Activated CD4-positive, alpha-beta memory T cell treated with anti-CD3 and anti-CD28 coated beads, Interleukin-2, amount 10 ng/mL, durations not matched to agents 7 days and 5 days (primary cell): ENCODE measurements at regions of chr1 and their contacts with region 1.

Region 1: GRCh38 chr1:248858891-248859889 is at the start of gene ZNF692:
- DNase-seq: peak; percentile 98
- H3K4me3 Mint-ChIP-seq: peak within 1 kb of the TSS; percentile 84
- H3K27ac Mint-ChIP-seq: peak within 1 kb of the TSS; percentile 93
- H3K4me1 Mint-ChIP-seq: peaks cover 57% of the 10 kb centered on the region
- H3K27me3 Mint-ChIP-seq: no peaks in the 10 kb centered on the region
- total RNA-seq, gene ZNF692: 45.9 to 49.8 TPM

Region 2: DNA sequence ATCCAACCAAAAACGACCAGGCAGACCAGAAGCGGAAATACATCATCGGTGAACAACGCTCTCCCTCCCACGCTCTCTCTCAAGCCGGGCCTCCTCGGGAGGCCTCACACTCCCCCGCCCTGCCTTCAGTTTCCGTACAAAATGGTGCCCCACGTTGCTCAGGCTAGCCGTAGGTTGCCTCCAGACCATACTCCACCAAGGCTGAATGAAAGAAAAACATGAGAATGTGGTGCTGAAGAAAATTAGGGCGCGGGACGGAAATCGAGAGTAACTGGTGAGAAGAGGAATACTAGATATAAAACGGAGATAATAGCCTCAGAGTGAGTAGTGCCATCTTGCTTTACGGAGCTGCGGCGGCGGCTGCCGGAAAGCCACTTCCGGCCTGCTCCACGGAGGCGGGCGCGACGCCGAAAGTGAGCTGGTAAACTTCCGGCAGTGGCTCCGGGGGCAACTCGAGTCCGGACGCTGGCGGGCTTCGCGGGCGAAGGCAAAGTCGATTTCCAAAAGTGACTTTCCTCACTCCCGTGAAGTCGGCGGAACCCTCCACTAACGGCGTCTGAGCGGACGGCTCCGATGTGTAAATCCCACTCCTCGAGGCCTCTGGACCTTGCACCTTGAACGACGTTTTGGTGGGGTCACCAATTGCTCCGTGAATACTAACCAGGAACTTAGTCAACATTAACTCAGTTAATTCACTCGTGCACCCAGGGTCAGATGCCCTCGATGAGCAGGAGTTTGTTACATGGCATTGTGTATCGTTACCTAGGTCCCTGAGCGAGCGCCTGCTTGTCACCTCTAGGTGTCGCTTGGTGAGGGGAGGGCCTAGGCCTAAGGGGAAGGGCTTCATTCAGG is 33.1 kb before region 1 on chr1 and contains the start of gene SH3BP5L:
- CTCF ChIA-PET with region 1: interaction called, 11 read pairs
- POLR2A ChIA-PET with region 1: interaction called, 25 read pairs
- DNase-seq: peak; percentile 91
- H3K4me3 Mint-ChIP-seq: peak within 1 kb of the TSS; percentile 84
- H3K27ac Mint-ChIP-seq: peak within 1 kb of the TSS; percentile 98
- H3K4me1 Mint-ChIP-seq: peaks cover 56% of the 10 kb centered on the region
- H3K27me3 Mint-ChIP-seq: peaks cover 2% of the 10 kb centered on the region
- total RNA-seq, gene SH3BP5L: 31.4 to 32.0 TPM

Region 3: DNA sequence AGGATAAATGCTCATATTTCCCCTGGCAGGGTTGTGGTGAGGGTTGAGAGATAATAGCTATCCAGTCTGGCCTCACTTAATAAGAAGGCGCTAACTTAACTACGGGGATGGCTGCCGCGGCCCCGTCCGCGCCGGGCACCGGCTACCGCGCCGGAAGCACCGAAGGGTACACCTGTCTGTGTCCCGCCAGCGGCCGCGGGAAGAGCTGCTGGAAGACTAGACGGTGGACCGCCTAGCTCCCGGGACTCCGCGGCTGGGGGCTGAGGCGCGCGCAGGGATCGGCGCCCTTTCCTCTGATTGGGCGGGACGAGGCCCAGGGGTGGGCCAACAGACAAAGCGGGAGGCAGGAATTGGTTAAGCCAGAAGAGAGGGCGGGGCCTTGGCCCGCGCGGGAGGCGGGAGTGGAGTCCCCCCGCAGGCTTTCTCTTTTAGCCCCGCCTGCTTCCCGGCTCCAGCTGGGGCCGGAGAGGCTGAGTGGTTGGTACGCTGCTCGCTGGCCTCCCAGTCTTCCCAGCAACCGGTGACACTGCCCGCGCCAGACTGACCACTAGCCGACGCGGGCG is 21.3 kb before region 1 on chr1 and contains the start of gene ZNF672:
- CTCF ChIA-PET with region 1: interaction called, 43 read pairs
- POLR2A ChIA-PET with region 1: interaction called, 90 read pairs
- DNase-seq: peak; percentile 96
- H3K4me3 Mint-ChIP-seq: no peak within 1 kb of the TSS
- H3K27ac Mint-ChIP-seq: no peak within 1 kb of the TSS
- H3K4me1 Mint-ChIP-seq: peaks cover 29% of the 10 kb centered on the region
- H3K27me3 Mint-ChIP-seq: peaks cover 4% of the 10 kb centered on the region
- total RNA-seq, gene ZNF672: 54.1 to 60.1 TPM

Region 4: GRCh38 chr1:248873409-248873992 is 14.3 kb after region 1 on chr1:
- CTCF ChIA-PET with region 1: interaction called, 15 read pairs
- POLR2A ChIA-PET with region 1: interaction called, 37 read pairs
- DNase-seq: peak; percentile 93
- H3K4me3 Mint-ChIP-seq: peak overlapping the region; percentile 81
- H3K27ac Mint-ChIP-seq: peak overlapping the region; percentile 84
- H3K4me1 Mint-ChIP-seq: peaks cover 22% of the 10 kb centered on the region
- H3K27me3 Mint-ChIP-seq: peaks cover 2% of the 10 kb centered on the region

Region 5: DNA sequence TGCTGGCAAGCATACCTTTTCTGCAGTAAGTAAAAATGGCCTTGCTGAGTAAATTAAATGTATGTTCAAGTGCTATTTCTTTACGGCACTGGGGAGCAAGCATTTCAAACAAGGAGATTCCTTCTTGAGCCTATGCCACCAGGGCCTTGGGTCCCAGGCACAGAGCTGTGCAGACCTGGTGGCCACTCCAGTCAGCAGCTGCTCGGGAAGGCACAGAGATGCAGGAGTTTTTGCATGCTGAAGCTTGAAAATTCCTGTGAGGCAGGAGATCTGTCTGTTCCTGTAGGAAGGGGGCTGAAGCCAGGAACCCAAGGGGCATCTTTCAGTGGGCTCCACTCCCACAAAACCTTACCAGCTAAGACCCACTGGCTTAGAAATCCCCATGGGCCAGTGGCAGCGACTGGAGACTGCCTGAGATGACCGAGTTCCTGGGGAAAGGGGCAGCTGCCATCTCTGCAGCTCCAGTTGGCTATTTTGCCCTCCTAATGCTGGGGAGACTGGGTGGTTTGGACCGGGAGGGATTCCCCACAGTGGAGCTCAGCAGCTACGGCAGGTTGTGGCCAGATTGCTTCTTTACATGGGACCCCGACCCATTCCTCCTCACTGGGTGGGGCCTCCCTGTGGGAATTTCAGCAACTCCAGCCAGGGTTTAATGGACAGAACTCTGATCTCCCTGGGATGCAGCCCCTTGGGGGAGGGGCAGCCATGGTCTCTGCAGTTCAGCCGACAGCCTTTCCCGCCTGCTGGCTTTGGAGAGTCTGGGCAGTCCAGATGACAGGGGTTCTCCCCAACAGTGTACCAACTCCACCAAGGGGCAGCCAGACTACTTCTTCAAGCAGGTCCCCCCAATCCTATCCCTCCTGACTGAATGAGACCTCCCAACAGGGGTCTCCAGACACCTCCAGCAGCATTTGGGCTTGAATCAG is 38.5 kb after region 1 on chr1:
- CTCF ChIA-PET with region 1: no interaction called
- POLR2A ChIA-PET with region 1: no interaction called
- DNase-seq: no peak
- H3K4me3 Mint-ChIP-seq: no peak overlapping the region
- H3K27ac Mint-ChIP-seq: no peak overlapping the region
- H3K4me1 Mint-ChIP-seq: peaks cover 6% of the 10 kb centered on the region
- H3K27me3 Mint-ChIP-seq: peaks cover 57% of the 10 kb centered on the region

Region 6: DNA sequence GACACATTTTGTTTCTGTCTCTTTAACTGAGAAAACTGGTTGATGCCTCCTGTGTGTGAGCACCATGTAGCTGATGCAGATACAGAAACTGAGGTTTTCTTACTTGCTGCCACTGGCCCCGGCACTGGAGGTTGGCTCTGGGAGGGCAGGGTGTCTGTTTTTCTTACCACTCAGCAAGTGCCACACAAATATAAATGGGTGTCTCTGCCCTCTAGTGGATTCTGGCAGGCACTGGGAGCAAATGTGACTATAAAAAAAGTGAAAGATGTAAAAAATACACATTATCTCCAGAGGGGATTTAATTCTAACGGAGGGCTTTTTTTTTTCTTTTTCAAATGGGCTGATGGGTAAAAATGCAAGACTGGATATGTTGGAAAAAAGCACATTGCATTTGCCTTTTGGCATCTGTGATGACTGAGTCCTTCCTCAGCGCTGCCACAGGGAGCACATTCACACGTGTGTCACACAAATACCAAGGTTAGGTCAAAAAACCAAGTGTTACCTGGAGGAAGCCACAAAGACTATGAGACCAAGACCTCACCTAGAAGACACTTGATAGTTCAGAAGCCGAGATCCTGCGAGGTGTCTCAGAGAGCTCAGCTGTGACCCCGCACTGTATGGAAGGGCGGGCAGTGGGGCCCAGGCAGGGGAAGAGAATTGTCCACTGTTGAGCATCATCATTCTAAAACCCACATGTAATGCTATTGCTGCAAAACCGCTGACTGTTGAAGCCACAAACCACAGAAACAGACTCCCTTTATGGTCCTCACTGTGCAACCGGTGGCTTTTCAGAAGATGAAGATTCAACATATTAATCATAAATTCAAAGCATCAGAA is 65.7 kb after region 1 on chr1:
- CTCF ChIA-PET with region 1: interaction called, 12 read pairs
- POLR2A ChIA-PET with region 1: no interaction called
- DNase-seq: peak; percentile 73
- H3K4me3 Mint-ChIP-seq: peak overlapping the region; percentile 11
- H3K27ac Mint-ChIP-seq: peak overlapping the region; percentile 69
- H3K4me1 Mint-ChIP-seq: peaks cover 49% of the 10 kb centered on the region
- H3K27me3 Mint-ChIP-seq: peaks cover 6% of the 10 kb centered on the region